ENCODE measurements at regions of chr5 and their contacts with region 1.

Region 1: DNA sequence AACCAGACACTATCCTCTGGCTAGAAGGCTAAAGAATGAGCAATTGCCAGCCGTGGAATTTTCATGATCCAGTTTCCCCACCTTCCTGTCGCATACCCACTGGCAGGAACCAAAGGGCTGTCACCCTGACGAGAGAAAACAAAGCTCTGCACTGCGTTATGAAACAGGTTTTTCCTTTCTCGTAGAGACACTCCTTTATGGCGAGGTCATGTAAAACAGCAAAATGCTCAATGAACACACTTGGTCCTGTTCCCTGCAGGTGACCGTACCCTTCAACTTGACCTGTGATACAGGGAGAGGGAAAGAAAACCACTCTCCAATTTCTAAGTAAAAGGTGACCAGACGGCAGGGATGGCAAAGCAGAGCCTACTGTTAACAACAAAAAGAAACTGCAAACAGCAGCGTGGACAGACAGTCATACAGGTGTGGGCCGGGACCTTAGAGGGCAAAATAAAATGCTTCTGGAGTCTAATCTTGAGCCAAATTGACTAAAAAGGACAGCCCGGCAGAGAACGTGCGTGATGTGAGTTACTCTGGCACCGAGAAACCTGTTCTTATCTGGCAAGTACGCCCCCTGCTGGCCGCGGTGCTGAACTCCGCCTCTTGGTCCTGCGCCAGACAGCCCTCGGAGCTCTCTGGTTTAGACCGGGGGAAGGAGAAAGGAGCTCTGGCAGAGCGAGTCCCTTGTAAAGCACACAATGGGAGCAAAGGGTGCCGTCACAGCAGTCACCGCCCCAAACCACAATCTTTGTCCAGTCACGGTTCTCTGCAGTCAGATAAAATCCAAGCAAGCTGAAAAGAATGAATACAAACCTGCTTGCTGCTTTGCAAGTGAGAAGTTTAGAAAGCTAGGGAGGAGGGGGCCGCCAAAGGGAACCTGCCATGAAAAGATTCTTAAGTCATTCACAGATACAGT is 98.9 kb downstream of the EFNA5 start:
- DNase-seq: peak; percentile 98 to 99
- H3K4me3 ChIP-seq: peak overlapping the region; percentile 56
- H3K27ac ChIP-seq: peak overlapping the region; percentile 100
- H3K4me1 ChIP-seq: peaks cover 82% of the 10 kb centered on the region
- H3K27me3 ChIP-seq: no peaks in the 10 kb centered on the region
- CTCF ChIP-seq: peak; percentile 95

Region 2: GRCh38 chr5:107104040-107104995 is 467.6 kb before region 1 on chr5:
- CTCF ChIA-PET with region 1: no interaction called
- POLR2A ChIA-PET with region 1: no interaction called
- intact Hi-C with region 1: loop called (anchors 1 kb)
- DNase-seq: peak in 1 of 2 experiments; percentile 2
- H3K4me3 ChIP-seq: no peak overlapping the region
- H3K27ac ChIP-seq: no peak overlapping the region
- H3K4me1 ChIP-seq: no peaks in the 10 kb centered on the region; the same call in 1 of the 2 replicates
- H3K27me3 ChIP-seq: no peaks in the 10 kb centered on the region
- CTCF ChIP-seq: peak; percentile 47

Region 3: GRCh38 chr5:107248066-107248695 is 323.7 kb before region 1 on chr5:
- CTCF ChIA-PET with region 1: interaction called, 3 read pairs
- POLR2A ChIA-PET with region 1: no interaction called
- intact Hi-C with region 1: loop called (anchors 5 kb)
- DNase-seq: peak; percentile 40 to 52
- H3K4me3 ChIP-seq: no peak overlapping the region
- H3K27ac ChIP-seq: no peak overlapping the region
- H3K4me1 ChIP-seq: no peaks in the 10 kb centered on the region
- H3K27me3 ChIP-seq: no peaks in the 10 kb centered on the region
- CTCF ChIP-seq: peak; percentile 89

Region 4: GRCh38 chr5:107425541-107426256 is 146.2 kb before region 1 on chr5:
- CTCF ChIA-PET with region 1: no interaction called
- POLR2A ChIA-PET with region 1: interaction called, 13 read pairs
- intact Hi-C with region 1: loop called (anchors 2 kb)
- DNase-seq: peak; percentile 43 to 89
- H3K4me3 ChIP-seq: no peak overlapping the region; the same call in 1 of the 2 replicates
- H3K27ac ChIP-seq: peak overlapping the region; percentile 85
- H3K4me1 ChIP-seq: peaks cover 68% of the 10 kb centered on the region
- H3K27me3 ChIP-seq: no peaks in the 10 kb centered on the region
- CTCF ChIP-seq: no peak

Region 5: DNA sequence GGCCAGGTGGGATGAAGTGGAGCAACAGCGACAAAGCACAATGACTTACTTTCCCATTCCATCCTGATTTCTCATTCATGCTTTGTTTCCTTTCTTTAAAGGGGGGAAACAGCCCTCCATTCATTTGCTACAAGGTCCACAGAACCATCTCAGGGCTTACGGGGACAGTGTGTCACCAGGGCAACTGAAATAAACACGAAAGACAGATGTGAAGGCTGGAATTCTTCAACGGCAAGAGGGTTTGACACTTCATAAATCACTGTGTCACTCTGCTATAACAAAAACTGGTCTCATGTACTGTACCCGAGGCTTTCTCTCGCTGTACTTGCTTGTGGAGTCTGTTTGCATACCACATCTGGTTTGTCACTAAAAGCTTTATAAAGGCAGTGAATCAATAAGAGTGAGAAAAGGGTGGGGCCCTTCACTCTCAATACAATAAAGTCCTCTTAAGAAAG is 52.0 kb before region 1 on chr5:
- CTCF ChIA-PET with region 1: interaction called, 3 read pairs
- POLR2A ChIA-PET with region 1: no interaction called
- intact Hi-C with region 1: loop called (anchors 5 kb)
- DNase-seq: peak; percentile 36 to 38
- H3K4me3 ChIP-seq: no peak overlapping the region
- H3K27ac ChIP-seq: no peak overlapping the region; the same call in 1 of the 2 replicates
- H3K4me1 ChIP-seq: peaks cover 3% of the 10 kb centered on the region; the same call in 1 of the 2 replicates
- H3K27me3 ChIP-seq: no peaks in the 10 kb centered on the region
- CTCF ChIP-seq: no peak

Region 6: GRCh38 chr5:107532169-107532878 is 39.6 kb before region 1 on chr5:
- CTCF ChIA-PET with region 1: no interaction called
- POLR2A ChIA-PET with region 1: no interaction called
- intact Hi-C with region 1: no loop called
- DNase-seq: no peak
- H3K4me3 ChIP-seq: no peak overlapping the region
- H3K27ac ChIP-seq: no peak overlapping the region
- H3K4me1 ChIP-seq: no peaks in the 10 kb centered on the region
- H3K27me3 ChIP-seq: no peaks in the 10 kb centered on the region
- CTCF ChIP-seq: no peak

Region 7: DNA sequence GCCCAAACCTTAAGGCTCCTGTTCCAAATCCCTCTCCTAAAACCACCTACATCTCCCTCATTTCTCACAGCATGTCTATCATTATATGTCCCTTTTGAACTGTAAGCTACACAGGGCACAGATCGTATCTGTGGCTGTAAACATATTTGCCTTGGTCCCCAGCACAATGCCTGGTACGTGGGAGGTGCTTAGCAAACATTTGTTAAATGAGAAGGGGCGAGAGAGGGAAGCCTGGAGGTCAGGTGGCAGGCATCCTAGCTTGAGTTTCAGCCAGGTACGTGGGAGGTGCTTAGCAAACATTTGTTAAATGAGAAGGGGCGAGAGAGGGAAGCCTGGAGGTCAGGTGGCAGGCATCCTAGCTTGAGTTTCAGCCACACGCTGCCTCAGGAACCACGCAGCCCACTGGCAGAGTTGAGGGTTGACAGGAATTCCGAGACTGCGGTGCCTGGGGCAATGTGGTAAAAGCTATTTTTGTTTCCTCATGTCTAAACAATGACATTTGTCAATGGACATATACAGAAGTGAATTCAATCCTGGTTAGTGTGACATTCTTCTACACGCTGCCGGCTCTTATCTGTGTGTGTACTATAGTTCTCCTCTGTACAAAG is 14.7 kb before region 1 on chr5:
- CTCF ChIA-PET with region 1: interaction called, 13 read pairs
- POLR2A ChIA-PET with region 1: interaction called, 6 read pairs
- intact Hi-C with region 1: loop called (anchors 1 kb)
- DNase-seq: peak; percentile 95 to 99
- H3K4me3 ChIP-seq: peak overlapping the region; percentile 38; the same call in 1 of the 2 replicates
- H3K27ac ChIP-seq: peak overlapping the region; percentile 96
- H3K4me1 ChIP-seq: peaks cover 65% of the 10 kb centered on the region
- H3K27me3 ChIP-seq: no peaks in the 10 kb centered on the region
- CTCF ChIP-seq: no peak